ENCODE measurements at regions of chr7 and their contacts with region 1.

Region 1: GRCh38 chr7:97179454-97180104 is 62.1 kb downstream of the SDHAF3 start:
- DNase-seq: peak in 7 of 9 donors; percentile 18 to 63 (median 53)
- ATAC-seq: peak; percentile 88
- H3K4me3 ChIP-seq: no peak overlapping the region
- H3K4me3 Mint-ChIP-seq: no peak overlapping the region
- H3K27ac ChIP-seq: no peak overlapping the region
- H3K27ac Mint-ChIP-seq: no peak overlapping the region
- H3K4me1 ChIP-seq: no peaks in the 10 kb centered on the region
- H3K4me1 Mint-ChIP-seq: peaks cover 0 to 4% (median 0%) of the 10 kb centered on the region in 7 donors
- H3K27me3 ChIP-seq: no peaks in the 10 kb centered on the region
- H3K27me3 Mint-ChIP-seq: no peaks in the 10 kb centered on the region

Region 2: DNA sequence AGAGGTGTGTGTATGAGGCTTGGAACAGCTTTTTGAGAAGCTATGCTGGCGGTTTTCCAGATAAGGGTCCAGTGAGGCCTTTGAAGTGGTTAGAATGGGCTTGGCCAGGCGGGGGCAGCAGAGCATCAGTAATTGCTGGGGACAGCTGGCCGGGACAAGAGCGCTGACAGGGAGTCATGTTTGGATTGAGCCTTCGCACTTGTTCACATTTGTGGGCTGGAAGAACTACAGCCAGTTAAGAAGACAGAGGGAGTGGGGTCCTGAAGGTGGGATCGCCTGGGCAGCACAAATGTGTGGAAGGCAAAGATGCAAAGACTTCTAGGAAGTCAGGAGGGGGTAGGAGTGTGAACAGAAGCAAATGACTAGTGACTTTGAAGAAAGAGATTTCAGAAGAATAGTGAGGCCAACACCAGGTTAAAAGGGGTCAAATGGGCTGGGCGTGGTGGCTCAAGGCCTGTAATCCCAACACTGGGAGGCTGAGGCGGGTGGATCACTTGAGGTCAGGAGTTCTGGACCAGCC is 74.8 kb before region 1 on chr7:
- CTCF ChIA-PET with region 1: interaction called, 5 read pairs
- POLR2A ChIA-PET with region 1: no interaction called
- intact Hi-C with region 1: loop called (anchors 1 kb)
- DNase-seq: peak; percentile 13 to 66 (median 33)
- ATAC-seq: peak; percentile 76
- H3K4me3 ChIP-seq: no peak overlapping the region
- H3K4me3 Mint-ChIP-seq: no peak overlapping the region
- H3K27ac ChIP-seq: no peak overlapping the region
- H3K27ac Mint-ChIP-seq: no peak overlapping the region
- H3K4me1 ChIP-seq: no peaks in the 10 kb centered on the region
- H3K4me1 Mint-ChIP-seq: no peaks in the 10 kb centered on the region
- H3K27me3 ChIP-seq: no peaks in the 10 kb centered on the region
- H3K27me3 Mint-ChIP-seq: peaks cover 8 to 45% (median 34%) of the 10 kb centered on the region in 5 donors

Region 3: GRCh38 chr7:97145068-97145467 is 34.5 kb before region 1 on chr7:
- CTCF ChIA-PET with region 1: no interaction called
- POLR2A ChIA-PET with region 1: no interaction called
- intact Hi-C with region 1: loop called (anchors 1 kb)
- DNase-seq: peak in 4 of 9 donors; percentile 9 to 22 (median 14)
- ATAC-seq: no peak
- H3K4me3 ChIP-seq: no peak overlapping the region
- H3K4me3 Mint-ChIP-seq: no peak overlapping the region
- H3K27ac ChIP-seq: no peak overlapping the region
- H3K27ac Mint-ChIP-seq: no peak overlapping the region
- H3K4me1 ChIP-seq: no peaks in the 10 kb centered on the region
- H3K4me1 Mint-ChIP-seq: peaks cover 0 to 9% (median 4%) of the 10 kb centered on the region in 7 donors
- H3K27me3 ChIP-seq: no peaks in the 10 kb centered on the region
- H3K27me3 Mint-ChIP-seq: no peaks in the 10 kb centered on the region

Region 4: GRCh38 chr7:97167176-97167575 is 12.4 kb before region 1 on chr7:
- CTCF ChIA-PET with region 1: no interaction called
- POLR2A ChIA-PET with region 1: no interaction called
- intact Hi-C with region 1: no loop called
- DNase-seq: no peak
- ATAC-seq: no peak
- H3K4me3 ChIP-seq: no peak overlapping the region
- H3K4me3 Mint-ChIP-seq: no peak overlapping the region
- H3K27ac ChIP-seq: no peak overlapping the region
- H3K27ac Mint-ChIP-seq: no peak overlapping the region
- H3K4me1 ChIP-seq: no peaks in the 10 kb centered on the region
- H3K4me1 Mint-ChIP-seq: peaks cover 3 to 24% (median 17%) of the 10 kb centered on the region in 7 donors
- H3K27me3 ChIP-seq: no peaks in the 10 kb centered on the region
- H3K27me3 Mint-ChIP-seq: no peaks in the 10 kb centered on the region